Natural killer cell (primary cell): ENCODE measurements at regions of chr17 and their contacts with region 1.

Region 1: DNA sequence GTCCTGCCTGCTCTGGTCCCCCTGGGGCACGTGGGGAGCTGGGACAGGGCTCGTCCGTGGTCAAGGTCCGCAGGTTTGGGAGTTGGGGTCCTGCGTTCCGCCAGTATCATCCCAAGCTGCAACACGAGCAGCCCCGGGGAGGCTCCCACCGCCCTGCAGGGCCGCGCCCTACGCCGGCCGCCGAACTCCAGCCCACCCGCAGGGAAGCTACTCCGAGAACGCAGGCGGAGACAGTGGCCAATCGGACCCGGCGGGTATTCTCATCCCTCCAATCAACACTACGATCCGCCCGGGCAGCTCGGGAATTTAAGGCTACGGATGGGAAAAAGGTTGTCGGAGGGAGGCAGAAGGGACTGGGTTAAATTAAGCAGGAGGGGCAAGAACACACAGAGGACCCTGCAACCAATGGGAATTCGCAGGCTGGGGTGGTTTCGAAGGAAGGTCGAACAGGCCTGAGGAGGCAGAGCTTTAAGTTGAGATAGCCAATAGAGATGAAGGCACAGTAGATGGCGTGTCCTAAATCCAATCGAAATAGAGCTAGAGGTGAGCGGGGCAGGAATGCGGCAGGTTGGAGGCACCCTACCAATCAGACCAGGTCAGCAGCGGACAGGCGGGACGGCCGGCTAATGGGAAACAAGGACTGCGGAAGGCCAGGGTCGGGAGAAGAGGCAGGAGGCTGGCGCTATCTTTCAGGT is 626 bp downstream of the SPAG7 start:
- DNase-seq: peak; percentile 87 to 98
- ATAC-seq: peak; percentile 78 to 93 (median 86)
- H3K4me3 ChIP-seq: peak overlapping the region; percentile 89
- H3K4me3 Mint-ChIP-seq: no peak overlapping the region
- H3K27ac ChIP-seq: peak overlapping the region; percentile 86
- H3K27ac Mint-ChIP-seq: no peak overlapping the region
- H3K4me1 ChIP-seq: peaks cover 32% of the 10 kb centered on the region
- H3K4me1 Mint-ChIP-seq: peaks cover 4 to 13% of the 10 kb centered on the region in 2 donors
- H3K27me3 ChIP-seq: no peaks in the 10 kb centered on the region
- H3K27me3 Mint-ChIP-seq: no peaks in the 10 kb centered on the region
- CTCF ChIP-seq: no peak

Region 2: GRCh38 chr17:4939796-4940624 is 27.0 kb before region 1 on chr17 and contains the starts of genes RNF167 and SLC25A11:
- intact Hi-C with region 1: loop called (anchors 1 kb)
- DNase-seq: peak; percentile 93 to 99
- ATAC-seq: peak; percentile 84 to 95 (median 87)
- H3K4me3 ChIP-seq: peak within 1 kb of the TSS; percentile 91
- H3K4me3 Mint-ChIP-seq: peak within 1 kb of the TSS; percentile 91
- H3K27ac ChIP-seq: peak within 1 kb of the TSS; percentile 78
- H3K27ac Mint-ChIP-seq: peak within 1 kb of the TSS; percentile 87 to 93
- H3K4me1 ChIP-seq: peaks cover 61% of the 10 kb centered on the region
- H3K4me1 Mint-ChIP-seq: peaks cover 58 to 84% of the 10 kb centered on the region in 2 donors
- H3K27me3 ChIP-seq: no peaks in the 10 kb centered on the region
- H3K27me3 Mint-ChIP-seq: no peaks in the 10 kb centered on the region
- CTCF ChIP-seq: no peak
- total RNA-seq, gene RNF167: 149 to 189 (median 177) TPM
- total RNA-seq, gene SLC25A11: 34.7 to 47.5 (median 42.5) TPM

Region 3: DNA sequence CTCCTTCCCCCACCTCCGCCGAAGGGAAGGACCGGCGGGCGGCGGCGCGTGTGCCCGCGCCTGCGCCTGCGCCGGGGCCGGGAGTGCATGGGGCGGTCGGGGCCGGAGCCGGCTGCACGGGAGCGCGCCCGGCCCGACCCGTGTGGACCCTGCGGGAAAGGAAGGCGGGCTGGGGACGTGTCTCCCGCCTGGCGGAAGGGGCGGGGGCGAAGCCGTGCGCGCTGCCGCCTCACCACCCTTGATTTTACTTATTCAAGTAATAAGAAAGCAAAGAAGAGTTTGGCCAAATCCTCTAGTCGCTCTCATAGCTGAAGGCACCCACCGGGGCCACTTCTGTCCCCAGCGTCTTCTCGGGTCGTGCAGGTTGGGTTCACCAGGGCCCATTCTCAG is 18.1 kb before region 1 on chr17:
- intact Hi-C with region 1: loop called (anchors 1 kb)
- DNase-seq: peak; percentile 72 to 87
- ATAC-seq: peak; percentile 30 to 69 (median 58)
- H3K4me3 ChIP-seq: peak overlapping the region; percentile 99
- H3K4me3 Mint-ChIP-seq: peak overlapping the region; percentile 91
- H3K27ac ChIP-seq: peak overlapping the region; percentile 97
- H3K27ac Mint-ChIP-seq: peak overlapping the region; percentile 87 to 93
- H3K4me1 ChIP-seq: peaks cover 45% of the 10 kb centered on the region
- H3K4me1 Mint-ChIP-seq: peaks cover 45 to 52% of the 10 kb centered on the region in 2 donors
- H3K27me3 ChIP-seq: no peaks in the 10 kb centered on the region
- H3K27me3 Mint-ChIP-seq: peaks cover 0 to 2% of the 10 kb centered on the region in 2 donors
- CTCF ChIP-seq: no peak